ENCODE measurements at regions of chr6 and their contacts with region 1.

Region 1: DNA sequence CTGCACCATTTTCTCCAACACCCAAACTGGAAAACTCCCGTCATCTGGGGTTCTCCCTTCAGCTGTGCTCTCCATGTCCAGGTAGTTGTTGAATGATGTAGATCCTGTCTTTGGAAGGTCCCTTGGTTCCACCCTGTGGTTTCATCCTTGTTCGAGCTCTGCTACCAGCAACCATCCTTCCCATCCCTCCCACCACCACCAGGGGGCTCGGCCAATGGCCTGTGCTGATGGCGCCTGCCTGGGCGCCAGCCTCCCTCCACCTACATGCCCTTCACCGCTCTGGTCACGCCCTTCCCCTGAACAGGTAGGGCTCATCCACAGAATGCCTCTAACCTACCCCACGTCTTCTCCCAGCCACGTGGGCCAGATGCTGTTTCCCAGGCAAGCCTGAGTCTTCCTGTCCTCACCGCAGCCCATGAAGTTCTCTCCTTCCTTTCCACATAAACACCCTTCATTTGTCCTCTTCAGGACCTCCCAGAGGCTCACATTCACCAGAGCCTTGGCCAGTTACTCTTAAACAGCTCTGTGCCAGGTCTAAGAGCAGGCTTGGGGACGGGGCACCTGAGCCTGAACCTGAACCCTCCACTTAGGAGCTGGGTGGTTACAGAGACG is 75.1 kb upstream of the DUSP22 start:
- DNase-seq: peak; percentile 44
- ATAC-seq: peak; percentile 40
- H3K4me3 Mint-ChIP-seq: no peak overlapping the region
- H3K27ac Mint-ChIP-seq: peak overlapping the region; percentile 60
- H3K4me1 Mint-ChIP-seq: peaks cover 44% of the 10 kb centered on the region
- H3K27me3 Mint-ChIP-seq: no peaks in the 10 kb centered on the region

Region 2: DNA sequence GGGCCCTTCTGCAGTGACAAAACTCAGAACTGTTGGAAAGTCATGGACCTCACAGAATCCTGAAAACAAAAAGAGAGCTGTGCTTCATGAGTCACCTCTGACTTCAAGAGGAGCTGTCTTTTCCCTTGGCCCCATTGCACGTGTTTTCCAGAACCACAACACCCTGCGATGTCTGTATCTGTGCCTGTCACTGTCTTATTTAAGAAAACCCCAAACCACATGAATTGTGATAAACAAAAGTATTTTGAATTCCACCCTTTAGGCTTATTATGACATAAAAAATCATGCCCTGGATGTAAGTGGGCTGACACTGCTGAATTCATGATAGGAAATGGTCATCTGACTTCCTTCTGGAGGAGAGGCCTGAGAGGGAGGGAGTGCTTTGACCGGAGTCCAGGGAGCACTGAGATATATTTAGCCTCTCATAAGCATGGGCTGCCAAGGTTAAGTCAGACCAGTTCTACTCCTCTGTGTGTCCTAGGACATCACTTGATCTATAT is 21.2 kb before region 1 on chr6:
- CTCF ChIA-PET with region 1: interaction called, 32 read pairs
- POLR2A ChIA-PET with region 1: interaction called, 3 read pairs
- DNase-seq: peak; percentile 52
- ATAC-seq: peak; percentile 66
- H3K4me3 Mint-ChIP-seq: no peak overlapping the region
- H3K27ac Mint-ChIP-seq: no peak overlapping the region
- H3K4me1 Mint-ChIP-seq: peaks cover 42% of the 10 kb centered on the region
- H3K27me3 Mint-ChIP-seq: no peaks in the 10 kb centered on the region

Region 3: DNA sequence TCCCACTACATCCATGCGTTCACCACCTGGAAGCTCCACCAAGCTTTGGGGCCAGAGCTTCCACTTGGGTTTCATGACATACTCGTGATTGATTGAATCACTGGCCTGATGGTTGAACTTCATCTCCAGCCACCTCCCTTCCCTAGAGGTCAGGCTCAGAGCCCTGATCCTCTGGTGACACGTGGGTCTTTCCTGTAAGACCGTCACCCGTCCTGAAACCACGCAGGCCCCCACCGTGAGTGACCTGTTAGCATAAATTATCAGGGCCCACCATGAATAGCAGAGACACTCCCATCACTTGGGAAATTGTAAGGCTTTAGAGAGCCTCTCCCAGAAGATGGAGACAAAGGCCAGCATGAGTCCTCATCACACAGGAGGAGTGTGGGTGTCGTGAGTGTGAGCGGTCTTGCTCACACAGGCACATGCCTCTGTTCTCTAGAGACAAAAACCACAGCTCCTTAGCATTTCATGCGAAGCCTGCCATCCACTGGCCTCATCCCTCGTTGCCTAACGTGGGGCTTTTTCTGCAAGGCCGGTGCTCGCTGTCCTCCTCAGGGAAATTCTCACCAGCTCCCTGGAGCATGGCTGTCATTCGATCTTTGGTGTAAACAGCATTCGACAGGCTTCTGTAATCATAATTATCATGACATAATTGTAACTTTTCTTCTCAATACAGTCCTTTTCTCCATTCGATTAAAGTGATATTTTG is 10.1 kb after region 1 on chr6:
- CTCF ChIA-PET with region 1: interaction called, 27 read pairs
- POLR2A ChIA-PET with region 1: interaction called, 5 read pairs
- DNase-seq: no peak
- ATAC-seq: no peak
- H3K4me3 Mint-ChIP-seq: no peak overlapping the region
- H3K27ac Mint-ChIP-seq: peak overlapping the region; percentile 95
- H3K4me1 Mint-ChIP-seq: peaks cover 72% of the 10 kb centered on the region
- H3K27me3 Mint-ChIP-seq: no peaks in the 10 kb centered on the region

Region 4: DNA sequence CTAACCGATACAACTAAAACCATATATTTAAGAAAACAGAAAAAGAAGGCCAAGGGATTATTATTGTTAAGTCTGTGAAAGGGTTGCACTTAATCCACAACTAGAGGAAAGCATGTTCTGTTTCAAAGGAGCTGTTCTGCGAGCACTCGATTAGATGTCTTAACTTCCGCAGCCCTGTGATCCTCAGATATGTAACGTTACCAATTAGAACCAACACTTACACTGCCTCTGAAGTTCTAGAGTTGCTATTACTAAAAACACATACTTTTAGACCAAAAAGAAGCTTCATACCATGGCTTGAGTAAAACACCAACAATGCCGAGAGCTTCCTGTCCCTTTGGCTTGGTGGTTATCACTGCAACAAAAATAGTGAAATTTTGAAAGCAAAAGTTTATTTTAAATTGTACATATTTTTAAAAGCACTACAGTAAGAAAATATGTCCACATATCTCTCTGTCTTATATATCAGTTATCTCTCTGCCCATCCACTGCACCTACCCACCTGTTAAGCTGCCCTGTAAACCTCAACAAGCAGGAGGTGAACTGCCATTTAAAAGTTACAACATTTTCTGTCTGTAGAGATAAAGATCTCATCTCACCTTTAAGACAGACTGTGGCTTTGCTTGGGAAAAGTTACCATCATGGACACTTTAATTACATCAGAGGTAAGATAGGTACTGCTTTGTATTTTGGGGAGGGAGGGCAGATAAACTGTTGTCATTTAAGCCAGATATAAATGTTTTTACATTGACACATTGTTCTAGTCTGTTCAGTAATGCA is 68.1 kb after region 1 on chr6:
- CTCF ChIA-PET with region 1: interaction called, 10 read pairs
- POLR2A ChIA-PET with region 1: no interaction called
- DNase-seq: no peak
- ATAC-seq: peak; percentile 59
- H3K4me3 Mint-ChIP-seq: no peak overlapping the region
- H3K27ac Mint-ChIP-seq: peak overlapping the region; percentile 53
- H3K4me1 Mint-ChIP-seq: peaks cover 50% of the 10 kb centered on the region
- H3K27me3 Mint-ChIP-seq: no peaks in the 10 kb centered on the region

Measured in activated CD8-positive, alpha-beta T cell treated with anti-CD3 and anti-CD28 coated beads, Interleukin-2, amount 10 ng/mL, durations not matched to agents 7 days and 5 days (primary cell).